ENCODE measurements at regions of chr15 and their contacts with region 1.

Region 1: DNA sequence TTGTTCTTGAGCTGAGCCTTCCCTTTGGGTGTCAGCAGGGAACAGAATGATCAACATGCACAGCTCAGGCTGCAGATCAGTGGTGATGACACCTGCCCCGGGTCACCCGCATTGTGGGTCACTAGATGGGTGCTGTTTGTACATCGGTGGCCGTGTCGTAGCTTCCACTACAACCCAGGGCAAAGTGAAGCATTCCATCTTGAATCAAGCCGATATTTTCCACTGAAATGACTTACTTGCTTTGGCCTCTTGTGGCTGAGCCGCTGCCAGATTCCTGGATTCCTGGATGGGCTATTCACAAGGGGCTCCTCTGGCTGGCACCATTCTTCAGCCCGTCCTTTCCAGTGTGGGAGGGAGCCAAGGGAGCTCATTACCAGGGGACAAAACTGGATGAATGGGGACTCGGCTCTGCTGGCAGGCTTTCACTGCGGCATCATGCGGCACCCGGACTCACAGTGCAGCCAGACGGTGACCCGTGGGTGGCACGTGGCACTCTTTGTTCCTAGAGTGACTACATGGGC is 65.6 kb downstream of the SLCO3A1 start:
- DNase-seq: peak; percentile 57 to 88 (median 83)
- H3K4me3 ChIP-seq: peak overlapping the region in 13 of 59 donors; percentile 11 to 39 (median 24)
- H3K27ac ChIP-seq: peak overlapping the region in 54 of 59 donors; percentile 3 to 85 (median 61)
- H3K27me3 ChIP-seq: no peaks in the 10 kb centered on the region
- CTCF ChIP-seq: peak in 11 of 56 donors; percentile 11 to 51 (median 14)

Region 2: DNA sequence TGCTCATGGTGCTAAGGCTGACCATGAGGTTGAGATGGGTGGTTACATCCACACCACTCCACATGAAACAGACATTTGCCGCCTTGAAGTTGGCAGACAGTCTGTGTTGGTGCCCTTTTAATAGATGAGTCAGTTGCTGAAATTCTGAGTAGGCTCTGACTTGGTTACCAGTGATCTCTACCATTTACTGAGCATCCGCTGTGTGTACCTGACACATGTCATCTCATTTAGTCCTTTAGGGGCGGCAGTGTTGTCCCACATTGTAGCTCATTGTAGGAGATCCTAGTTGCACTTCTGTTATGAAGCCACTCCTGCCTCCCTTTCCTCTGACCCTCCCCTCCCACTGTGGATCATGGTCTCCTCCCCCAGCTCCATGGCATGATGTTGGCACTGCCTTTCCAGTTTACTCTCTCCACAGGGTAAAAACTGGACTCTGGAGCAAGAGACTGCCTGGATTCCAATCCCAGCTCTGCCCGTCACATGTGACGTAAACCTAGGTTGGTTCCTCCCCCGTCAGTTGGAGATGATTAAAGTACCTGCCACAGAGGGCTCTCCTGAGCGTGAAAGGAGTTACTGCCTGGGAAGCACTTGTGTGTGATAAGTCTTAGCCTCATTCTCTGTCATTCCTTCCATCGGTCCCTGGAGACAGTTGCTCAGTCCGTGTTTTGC is 43.9 kb before region 1 on chr15:
- intact Hi-C with region 1: loop called in 1 of 2 experiments (anchors 5 kb)
- DNase-seq: no peak
- H3K4me3 ChIP-seq: no peak overlapping the region
- H3K27ac ChIP-seq: peak overlapping the region in 5 of 59 donors; percentile 2 to 33 (median 14)
- H3K27me3 ChIP-seq: no peaks in the 10 kb centered on the region
- CTCF ChIP-seq: no peak

Region 3: DNA sequence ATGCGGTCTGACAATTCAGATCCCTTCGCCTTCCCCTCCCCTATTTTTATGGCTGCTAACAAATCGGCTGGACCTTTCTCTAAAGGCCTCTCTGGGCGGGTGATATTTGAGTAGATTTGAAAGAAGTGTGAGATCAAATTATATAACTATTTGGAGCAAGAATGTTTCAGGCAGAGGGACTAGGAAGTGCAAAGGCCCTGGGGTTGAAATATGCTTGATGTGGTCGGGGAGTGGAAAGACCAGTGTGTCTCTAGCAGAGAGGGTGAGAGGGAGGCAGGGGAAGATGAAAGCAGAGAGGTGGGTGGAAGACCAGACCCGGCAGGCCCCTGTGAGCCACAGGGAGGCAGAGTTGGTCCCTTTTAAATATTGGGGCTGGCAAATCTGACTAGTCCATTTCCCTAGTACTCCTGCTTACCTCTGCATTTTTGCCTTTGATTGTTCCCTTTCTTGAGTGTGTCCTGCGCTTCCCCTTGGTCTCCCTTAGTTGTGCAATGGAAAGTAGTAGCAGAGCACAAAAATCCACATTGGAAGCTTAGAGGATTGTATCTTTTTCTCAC is 33.3 kb before region 1 on chr15:
- intact Hi-C with region 1: loop called in 1 of 2 experiments (anchors 2 kb)
- DNase-seq: no peak
- H3K4me3 ChIP-seq: no peak overlapping the region
- H3K27ac ChIP-seq: peak overlapping the region in 58 of 59 donors; percentile 76 to 99 (median 94)
- H3K27me3 ChIP-seq: no peaks in the 10 kb centered on the region
- CTCF ChIP-seq: peak in 22 of 56 donors; percentile 0 to 34 (median 20)